ENCODE measurements at regions of chr5 and their contacts with region 1.

Region 1: GRCh38 chr5:132180134-132180745 is 47.4 kb downstream of the P4HA2 start:
- DNase-seq: no peak
- ATAC-seq: peak; percentile 51 to 60

Region 2: GRCh38 chr5:132369474-132370180 is 189.4 kb after region 1 on chr5 and contains the start of gene SLC22A5:
- intact Hi-C with region 1: loop called in 1 of 2 experiments (anchors 10 kb)
- DNase-seq: peak; percentile 73
- ATAC-seq: peak; percentile 86 to 87
- total RNA-seq, gene SLC22A5: 7.9 to 15.3 TPM

Region 3: GRCh38 chr5:132612846-132613245 is 432.6 kb after region 1 on chr5:
- intact Hi-C with region 1: no loop called
- DNase-seq: no peak
- ATAC-seq: no peak

Measured in left cardiac atrium (tissue), 4 donors.